GM12878 (cell line): ENCODE measurements at regions of chr15 and their contacts with region 1.

Region 1: DNA sequence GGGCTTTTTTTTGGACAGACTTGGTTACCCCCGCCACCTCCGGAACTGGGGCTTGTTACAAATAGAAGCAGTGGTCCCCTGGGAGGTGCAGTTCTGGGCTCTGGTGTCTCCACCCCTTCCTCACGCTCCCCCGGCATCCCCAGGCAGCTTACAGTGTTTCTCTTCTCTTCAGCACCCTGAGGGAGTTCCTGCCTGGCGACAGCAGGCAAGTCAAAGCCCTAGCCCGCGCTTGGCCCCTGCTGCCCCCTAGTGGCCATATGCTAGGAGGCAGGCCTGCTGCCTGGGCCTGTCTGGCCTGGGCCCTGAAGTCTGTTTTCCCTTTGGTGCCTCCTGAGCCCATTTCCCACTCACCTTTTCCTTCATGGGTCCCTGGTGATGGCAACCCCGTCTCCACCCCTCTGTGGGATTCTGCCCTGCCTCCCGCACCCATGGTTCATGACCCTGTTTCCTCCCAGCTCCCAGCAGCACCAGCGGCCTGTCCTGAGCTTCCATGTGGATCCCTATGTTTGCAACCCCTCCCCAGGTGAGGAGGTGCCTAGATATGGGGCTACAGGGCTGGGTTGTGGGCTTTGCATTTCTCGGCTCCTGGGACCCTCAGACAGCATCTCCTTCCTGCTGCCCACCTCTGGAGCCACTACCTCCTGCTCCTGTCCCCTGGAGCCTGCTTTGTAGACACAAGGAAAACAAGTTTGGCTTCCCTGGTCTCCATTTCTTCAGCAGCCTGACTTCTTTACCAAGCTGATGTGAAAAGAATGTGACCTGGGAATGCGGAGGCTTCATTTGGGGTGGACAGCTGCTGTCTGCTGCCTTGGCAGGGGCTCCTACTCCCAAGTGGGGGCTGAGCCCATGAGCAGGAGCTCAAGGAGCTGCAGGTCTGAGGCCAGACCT is 2.2 kb downstream of the SNX22 start:
- DNase-seq: peak; percentile 86
- ATAC-seq: peak; percentile 76
- H3K4me3 ChIP-seq: peak overlapping the region; percentile 82
- H3K27ac ChIP-seq: peak overlapping the region; percentile 30
- H3K4me1 ChIP-seq: peaks cover 42% of the 10 kb centered on the region
- H3K27me3 ChIP-seq: no peaks in the 10 kb centered on the region
- CTCF ChIP-seq: peak; percentile 99; a peak in 5 of 6 replicates
- EP300 ChIP-seq: no peak
- POLR2A ChIP-seq: peak; percentile 78
- RAD21 ChIP-seq: peak; percentile 94

Region 2: DNA sequence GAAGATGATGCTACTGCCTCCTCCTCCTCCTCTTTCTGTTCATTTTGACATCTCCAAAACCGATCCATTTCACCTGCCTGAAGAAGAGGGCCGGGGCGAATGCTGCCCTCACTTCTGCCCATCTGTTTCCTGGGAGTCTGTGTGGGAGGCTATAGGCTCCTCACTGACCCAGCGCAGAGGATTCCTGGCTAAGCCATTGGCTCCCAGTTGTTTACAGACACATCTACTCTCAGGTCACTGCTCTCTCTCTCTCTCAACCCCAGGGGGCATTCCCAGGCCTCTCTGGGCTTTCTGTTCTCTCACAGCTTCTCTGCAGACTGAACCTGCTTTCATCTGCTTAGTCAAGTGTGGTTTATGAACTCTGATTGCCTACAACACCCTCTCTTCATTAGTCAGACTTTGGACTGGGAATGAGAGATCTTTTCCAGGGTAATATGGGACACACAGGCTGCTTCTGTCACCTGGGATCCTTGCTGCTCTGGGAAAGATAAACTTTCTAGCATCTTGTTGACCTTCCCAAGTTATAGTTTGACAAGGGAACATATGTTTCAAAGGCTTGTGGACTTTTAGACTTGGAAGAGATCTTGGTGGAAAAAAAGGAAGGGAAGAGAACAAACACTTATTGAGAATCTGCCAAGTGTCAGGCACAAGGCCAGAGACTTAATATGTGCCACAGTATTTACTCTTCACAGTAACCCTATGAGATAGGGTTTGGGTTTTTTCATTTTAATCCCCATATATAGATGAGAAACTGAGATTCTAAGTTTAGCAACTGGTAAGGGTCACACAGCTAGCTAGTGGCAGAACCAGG is 679.5 kb before region 1 on chr15:
- CTCF ChIA-PET with region 1: no interaction called
- POLR2A ChIA-PET with region 1: no interaction called
- RAD21 ChIA-PET with region 1: no interaction called
- SMC1A ChIA-PET with region 1: no interaction called
- in situ Hi-C with region 1: no loop called
- intact Hi-C with region 1: loop called (anchors 10 kb)
- DNase-seq: peak; percentile 97
- ATAC-seq: peak; percentile 80
- H3K4me3 ChIP-seq: peak overlapping the region; percentile 59
- H3K27ac ChIP-seq: peak overlapping the region; percentile 100
- H3K4me1 ChIP-seq: peaks cover 62% of the 10 kb centered on the region
- H3K27me3 ChIP-seq: no peaks in the 10 kb centered on the region
- CTCF ChIP-seq: no peak
- EP300 ChIP-seq: peak; percentile 52 to 74; a peak in 2 of 4 replicates
- POLR2A ChIP-seq: no peak; the same call in 1 of the 2 replicates
- RAD21 ChIP-seq: peak; percentile 40; the same call in 1 of the 2 replicates

Region 3: DNA sequence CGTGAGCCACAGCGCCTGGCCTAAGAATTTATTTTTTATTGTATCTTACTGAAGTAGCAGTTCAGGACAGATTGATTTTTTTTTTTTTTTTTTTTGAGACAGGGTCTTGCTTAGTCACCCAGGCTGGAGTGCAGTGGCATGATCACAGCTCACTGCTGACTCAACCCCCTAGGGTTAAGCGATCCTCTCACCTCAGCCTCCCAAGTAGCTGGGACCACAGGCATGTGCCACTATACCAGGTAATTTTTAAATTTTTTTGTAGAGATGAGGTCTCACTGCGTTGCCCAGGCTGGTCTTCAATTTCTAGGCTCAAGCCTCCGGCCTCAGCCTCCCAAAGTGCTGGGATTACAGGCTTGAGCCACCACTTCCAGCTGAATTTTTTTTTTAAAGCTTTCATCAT is 220.2 kb before region 1 on chr15:
- CTCF ChIA-PET with region 1: no interaction called
- POLR2A ChIA-PET with region 1: no interaction called
- RAD21 ChIA-PET with region 1: no interaction called
- SMC1A ChIA-PET with region 1: no interaction called
- in situ Hi-C with region 1: no loop called
- intact Hi-C with region 1: no loop called
- DNase-seq: no peak
- ATAC-seq: no peak
- H3K4me3 ChIP-seq: no peak overlapping the region
- H3K27ac ChIP-seq: no peak overlapping the region
- H3K4me1 ChIP-seq: no peaks in the 10 kb centered on the region
- H3K27me3 ChIP-seq: no peaks in the 10 kb centered on the region
- CTCF ChIP-seq: no peak
- EP300 ChIP-seq: no peak
- POLR2A ChIP-seq: no peak
- RAD21 ChIP-seq: no peak

Region 4: DNA sequence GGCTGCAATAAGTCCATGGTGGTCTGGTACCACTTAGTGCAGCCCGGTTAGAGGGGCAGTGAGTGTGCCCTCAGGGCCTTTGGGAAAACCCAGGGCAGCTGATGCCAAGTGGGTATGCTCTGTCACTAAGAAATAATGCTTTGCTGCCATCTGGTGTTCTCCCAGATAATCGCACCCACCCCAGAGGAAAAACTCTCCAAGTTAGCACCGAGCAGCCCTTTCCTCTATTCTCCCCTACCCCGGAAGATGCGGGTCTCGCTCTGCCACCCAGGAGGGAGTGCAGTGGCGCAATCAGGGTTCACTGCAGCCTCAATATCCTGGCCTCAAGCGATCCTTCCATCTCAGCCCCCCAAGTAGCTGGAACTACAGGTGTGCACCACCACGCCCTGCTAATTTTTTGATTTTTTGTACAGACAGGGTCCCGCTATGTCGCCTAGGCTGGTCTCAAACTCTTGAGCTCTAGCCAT is 86.1 kb before region 1 on chr15:
- CTCF ChIA-PET with region 1: interaction called, 29 read pairs
- POLR2A ChIA-PET with region 1: interaction called, 4 read pairs
- RAD21 ChIA-PET with region 1: interaction called, 14 read pairs
- SMC1A ChIA-PET with region 1: interaction called, 19 read pairs
- in situ Hi-C with region 1: no loop called
- intact Hi-C with region 1: no loop called
- DNase-seq: peak; percentile 40
- ATAC-seq: peak; percentile 94
- H3K4me3 ChIP-seq: no peak overlapping the region
- H3K27ac ChIP-seq: no peak overlapping the region
- H3K4me1 ChIP-seq: peaks cover 13% of the 10 kb centered on the region
- H3K27me3 ChIP-seq: no peaks in the 10 kb centered on the region
- CTCF ChIP-seq: peak; percentile 72 to 83 (median 77)
- EP300 ChIP-seq: no peak
- POLR2A ChIP-seq: no peak
- RAD21 ChIP-seq: peak; percentile 89

Region 5: GRCh38 chr15:64100958-64101357 is 52.8 kb before region 1 on chr15:
- CTCF ChIA-PET with region 1: interaction called, 46 read pairs
- POLR2A ChIA-PET with region 1: interaction called, 5 read pairs
- RAD21 ChIA-PET with region 1: interaction called, 13 read pairs
- SMC1A ChIA-PET with region 1: interaction called, 6 read pairs
- in situ Hi-C with region 1: no loop called
- intact Hi-C with region 1: no loop called
- DNase-seq: no peak
- ATAC-seq: peak; percentile 36; the same call in 2 of the 3 replicates
- H3K4me3 ChIP-seq: 0 out of 2 replicates have a peak overlapping the region, but pooled peaks have one; percentile 2
- H3K27ac ChIP-seq: no peak overlapping the region
- H3K4me1 ChIP-seq: peaks cover 13% of the 10 kb centered on the region
- H3K27me3 ChIP-seq: no peaks in the 10 kb centered on the region
- CTCF ChIP-seq: no peak
- EP300 ChIP-seq: no peak
- POLR2A ChIP-seq: no peak
- RAD21 ChIP-seq: no peak

Region 6: DNA sequence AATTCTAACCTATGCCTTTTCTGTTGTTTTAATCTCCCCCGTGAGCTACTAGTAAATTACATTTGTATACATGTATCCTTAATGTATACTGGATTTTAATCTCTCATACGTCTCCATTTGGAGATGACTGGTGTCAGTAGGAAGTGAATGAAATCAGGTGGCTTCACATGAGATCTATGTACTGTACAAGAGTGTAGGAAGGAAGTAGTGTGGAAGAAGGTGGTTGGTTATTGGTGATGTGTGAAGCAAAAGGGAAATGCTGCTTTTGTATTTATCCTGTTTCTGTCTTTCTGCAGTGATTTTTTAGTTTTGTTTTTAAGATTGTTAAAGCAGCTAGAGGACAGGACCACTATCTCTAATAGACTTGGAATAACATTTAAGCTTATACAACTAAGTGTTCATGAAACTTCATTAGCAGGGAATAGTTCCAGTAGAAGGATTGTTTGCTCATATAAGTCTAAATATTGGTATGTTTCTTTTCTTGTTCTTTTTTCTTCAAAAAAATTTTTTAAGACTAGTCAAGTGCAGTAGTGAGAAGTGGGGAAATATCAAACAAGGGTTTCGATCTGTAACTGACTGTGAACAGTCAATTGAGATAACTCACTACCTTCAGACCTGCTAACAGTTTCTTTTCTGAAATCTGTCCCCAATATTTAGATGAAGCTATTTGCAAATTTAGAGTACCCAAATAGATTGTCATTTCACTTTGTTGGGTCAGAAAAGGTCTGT is 42.6 kb before region 1 on chr15:
- CTCF ChIA-PET with region 1: interaction called, 11 read pairs
- POLR2A ChIA-PET with region 1: no interaction called
- RAD21 ChIA-PET with region 1: interaction called, 3 read pairs
- SMC1A ChIA-PET with region 1: no interaction called
- in situ Hi-C with region 1: no loop called
- intact Hi-C with region 1: no loop called
- DNase-seq: no peak
- ATAC-seq: peak; percentile 67
- H3K4me3 ChIP-seq: 0 out of 2 replicates have a peak overlapping the region, but pooled peaks have one; percentile 11
- H3K27ac ChIP-seq: peak overlapping the region; percentile 30
- H3K4me1 ChIP-seq: peaks cover 26% of the 10 kb centered on the region
- H3K27me3 ChIP-seq: no peaks in the 10 kb centered on the region
- CTCF ChIP-seq: no peak
- EP300 ChIP-seq: no peak
- POLR2A ChIP-seq: no peak
- RAD21 ChIP-seq: no peak

Region 7: GRCh38 chr15:64125978-64126377 is 27.7 kb before region 1 on chr15:
- CTCF ChIA-PET with region 1: interaction called, 13 read pairs
- POLR2A ChIA-PET with region 1: interaction called, 4 read pairs
- RAD21 ChIA-PET with region 1: interaction called, 3 read pairs
- SMC1A ChIA-PET with region 1: interaction called, 7 read pairs
- in situ Hi-C with region 1: no loop called
- intact Hi-C with region 1: no loop called
- DNase-seq: no peak
- ATAC-seq: no peak
- H3K4me3 ChIP-seq: no peak overlapping the region
- H3K27ac ChIP-seq: no peak overlapping the region
- H3K4me1 ChIP-seq: no peaks in the 10 kb centered on the region
- H3K27me3 ChIP-seq: no peaks in the 10 kb centered on the region
- CTCF ChIP-seq: no peak
- EP300 ChIP-seq: no peak
- POLR2A ChIP-seq: no peak
- RAD21 ChIP-seq: no peak

Region 8: DNA sequence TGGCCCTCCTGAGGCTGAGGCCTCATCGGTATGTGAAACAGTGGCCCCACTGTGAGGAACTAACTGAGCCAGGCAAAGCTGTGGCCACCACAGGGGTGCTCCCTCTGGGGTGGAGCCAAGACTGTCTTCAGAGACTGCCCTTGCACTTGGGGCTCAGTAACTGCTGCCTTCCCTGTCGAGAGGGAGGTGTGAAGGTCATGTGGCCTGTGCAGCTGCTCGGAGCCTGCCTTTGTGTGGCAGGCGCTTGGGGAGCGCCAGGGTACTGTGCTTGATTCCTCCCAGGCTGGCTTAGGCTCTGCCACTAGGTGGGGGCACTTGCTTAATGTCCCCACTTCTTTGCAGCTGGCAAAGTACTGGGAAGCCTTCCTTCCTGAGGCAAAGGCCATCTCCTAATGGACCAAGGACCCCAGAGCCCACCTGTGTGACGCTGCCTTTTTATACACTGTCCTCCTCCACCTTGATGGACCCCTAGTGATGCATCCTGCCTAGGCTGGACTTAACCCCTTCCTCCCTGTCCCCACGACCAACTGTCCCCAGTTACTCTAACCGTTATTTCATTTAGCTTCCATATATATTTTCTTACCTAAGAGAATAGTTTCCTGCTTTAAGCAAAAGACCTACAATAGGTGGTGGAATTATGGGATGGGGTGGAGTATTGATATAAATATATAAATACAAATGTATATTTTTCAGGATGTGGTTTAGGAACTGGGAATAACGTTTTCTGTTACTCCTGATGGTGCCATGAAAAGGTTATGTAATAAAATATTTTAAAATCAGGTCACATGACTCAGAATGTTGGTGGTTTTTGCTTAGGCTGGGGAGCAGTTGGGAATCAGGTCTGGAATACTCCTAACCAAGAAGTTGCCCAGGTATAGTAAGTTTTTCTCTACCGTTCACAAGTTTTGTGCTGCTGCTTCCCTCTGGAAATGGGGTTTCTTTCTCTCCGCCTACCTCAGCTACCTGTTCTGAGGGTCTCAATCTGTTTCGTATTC is 16.2 kb before region 1 on chr15:
- CTCF ChIA-PET with region 1: interaction called, 98 read pairs
- POLR2A ChIA-PET with region 1: interaction called, 5 read pairs
- RAD21 ChIA-PET with region 1: interaction called, 6 read pairs
- SMC1A ChIA-PET with region 1: interaction called, 5 read pairs
- in situ Hi-C with region 1: no loop called
- intact Hi-C with region 1: no loop called
- DNase-seq: no peak
- ATAC-seq: peak; percentile 80
- H3K4me3 ChIP-seq: no peak overlapping the region
- H3K27ac ChIP-seq: no peak overlapping the region
- H3K4me1 ChIP-seq: peaks cover 2% of the 10 kb centered on the region; the same call in 1 of the 2 replicates
- H3K27me3 ChIP-seq: no peaks in the 10 kb centered on the region
- CTCF ChIP-seq: peak in 1 of 3 experiments; percentile 33; a peak in 2 of 6 replicates
- EP300 ChIP-seq: no peak
- POLR2A ChIP-seq: no peak
- RAD21 ChIP-seq: 0 out of 2 replicates have a peak, but pooled peaks have one; percentile 12

Region 9: GRCh38 chr15:64490598-64491259 is 337.0 kb after region 1 on chr15:
- CTCF ChIA-PET with region 1: no interaction called
- POLR2A ChIA-PET with region 1: no interaction called
- RAD21 ChIA-PET with region 1: no interaction called
- SMC1A ChIA-PET with region 1: no interaction called
- in situ Hi-C with region 1: no loop called
- intact Hi-C with region 1: no loop called
- DNase-seq: no peak
- ATAC-seq: no peak
- H3K4me3 ChIP-seq: no peak overlapping the region
- H3K27ac ChIP-seq: no peak overlapping the region
- H3K4me1 ChIP-seq: no peaks in the 10 kb centered on the region
- H3K27me3 ChIP-seq: no peaks in the 10 kb centered on the region
- CTCF ChIP-seq: no peak
- EP300 ChIP-seq: no peak
- POLR2A ChIP-seq: no peak
- RAD21 ChIP-seq: no peak